ENCODE measurements at regions of chr3 and their contacts with region 1.

Region 1: DNA sequence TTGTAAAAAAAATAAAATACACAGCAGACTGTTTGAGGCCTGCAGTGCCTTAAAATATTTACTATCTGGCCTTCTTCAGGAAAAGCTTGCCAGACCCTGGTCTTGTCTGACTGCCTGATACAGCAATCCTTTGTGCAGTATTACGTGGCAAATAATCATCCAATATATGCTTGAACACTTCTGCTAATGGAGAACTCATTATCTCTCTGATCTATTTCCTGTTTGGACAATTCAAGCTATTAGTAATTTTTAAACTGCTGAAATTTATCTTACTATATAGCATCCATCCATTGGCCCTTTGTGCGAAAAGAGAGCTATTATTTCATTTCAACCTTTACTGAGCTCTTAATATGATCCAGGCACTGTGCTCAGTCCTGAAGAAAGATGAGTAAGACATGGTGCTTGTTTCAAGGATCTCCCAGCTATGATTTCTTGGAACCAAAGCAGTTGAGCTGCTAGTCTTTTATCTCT is 15.9 kb downstream of the ATG7 start:
- DNase-seq: no peak
- H3K4me3 ChIP-seq: no peak overlapping the region
- H3K4me3 Mint-ChIP-seq: no peak overlapping the region
- H3K27ac Mint-ChIP-seq: no peak overlapping the region
- H3K4me1 ChIP-seq: 0 out of 2 replicates have a peak, but pooled peaks cover 11% of the 10 kb centered on the region
- H3K4me1 Mint-ChIP-seq: peaks cover 17% of the 10 kb centered on the region
- H3K27me3 ChIP-seq: no peaks in the 10 kb centered on the region
- H3K27me3 Mint-ChIP-seq: no peaks in the 10 kb centered on the region
- CTCF ChIP-seq: no peak

Region 2: DNA sequence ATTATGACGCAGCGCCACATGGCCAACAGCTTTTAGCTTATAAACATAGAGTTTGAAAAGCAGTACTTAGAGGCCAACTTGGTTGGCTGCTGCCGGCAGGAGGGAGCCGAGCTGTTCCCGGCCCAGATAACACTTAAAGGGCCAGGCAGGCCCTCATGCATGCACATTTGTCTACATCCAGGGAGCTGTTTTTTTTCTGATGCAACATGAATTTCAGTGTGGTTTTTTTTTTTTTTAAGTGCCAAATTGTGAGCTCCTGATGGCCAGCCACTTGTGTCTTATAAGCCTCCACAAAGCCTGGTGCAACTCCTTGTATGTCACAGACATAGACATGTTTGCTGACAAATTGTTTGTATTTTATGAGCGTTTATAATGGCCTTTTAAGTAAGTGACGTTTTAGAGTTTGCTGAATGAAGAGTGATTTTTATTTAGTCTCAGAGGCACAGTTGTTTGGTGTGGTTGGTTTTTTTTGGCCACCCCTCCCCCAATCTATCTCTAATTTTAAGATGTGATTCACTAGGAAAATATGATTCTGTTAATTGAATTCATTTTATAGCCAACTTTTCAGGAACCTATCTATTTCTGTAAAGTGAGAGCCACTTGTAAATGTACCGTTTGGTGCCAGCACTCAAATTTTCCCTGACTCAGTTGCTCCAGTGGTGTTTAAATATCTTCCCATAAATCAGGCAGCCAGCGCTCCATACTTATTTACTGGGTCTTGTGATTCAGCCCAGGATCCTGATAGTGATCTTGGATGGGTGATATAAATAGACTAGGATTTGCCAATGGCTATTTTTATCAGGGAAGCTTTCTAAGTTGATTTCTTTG is 221.3 kb after region 1 on chr3:
- CTCF ChIA-PET with region 1: no interaction called
- POLR2A ChIA-PET with region 1: interaction called, 13 read pairs
- intact Hi-C with region 1: no loop called
- DNase-seq: no peak
- H3K4me3 ChIP-seq: no peak overlapping the region
- H3K4me3 Mint-ChIP-seq: no peak overlapping the region
- H3K27ac Mint-ChIP-seq: no peak overlapping the region
- H3K4me1 ChIP-seq: no peaks in the 10 kb centered on the region
- H3K4me1 Mint-ChIP-seq: no peaks in the 10 kb centered on the region
- H3K27me3 ChIP-seq: no peaks in the 10 kb centered on the region
- H3K27me3 Mint-ChIP-seq: no peaks in the 10 kb centered on the region
- CTCF ChIP-seq: no peak

Region 3: DNA sequence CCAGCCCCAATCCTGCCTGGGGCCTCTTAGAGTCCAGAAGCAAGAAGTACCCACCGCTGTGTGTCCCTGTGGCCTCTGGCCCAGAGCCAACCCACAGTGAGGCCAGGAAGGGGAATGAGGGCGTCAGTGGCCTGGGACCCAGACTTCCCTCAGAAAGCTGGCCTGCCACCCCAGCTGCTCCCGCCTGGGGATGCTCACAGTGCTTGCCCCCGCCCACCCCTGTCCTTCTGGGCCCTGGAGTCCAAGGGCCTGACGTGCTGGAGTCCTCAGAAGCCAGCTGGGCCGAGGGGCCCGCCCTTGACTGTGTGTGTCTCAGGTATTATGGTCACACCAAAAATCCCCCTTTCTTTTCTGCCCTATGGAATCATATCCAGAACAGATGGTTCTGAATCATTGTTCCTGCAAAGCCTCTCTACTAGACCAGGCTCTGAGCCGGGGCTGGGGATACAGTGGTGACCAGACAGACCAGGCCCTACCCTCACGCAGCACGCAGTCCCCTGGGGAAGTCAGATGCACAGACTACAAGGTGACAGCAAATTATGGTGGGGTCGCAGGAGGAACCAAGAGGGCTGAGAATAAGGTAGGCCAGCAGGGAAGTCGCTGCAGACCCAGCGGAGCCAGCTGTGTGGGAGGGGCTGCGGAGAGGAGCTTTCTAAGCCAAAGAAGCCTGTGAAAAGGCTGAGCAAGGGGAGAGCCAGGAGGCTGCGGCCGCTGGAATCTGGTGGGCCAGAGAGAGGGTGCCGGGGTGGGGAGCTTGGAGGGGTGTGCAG is 256.5 kb after region 1 on chr3:
- CTCF ChIA-PET with region 1: no interaction called
- POLR2A ChIA-PET with region 1: no interaction called
- intact Hi-C with region 1: no loop called
- DNase-seq: no peak
- H3K4me3 ChIP-seq: no peak overlapping the region
- H3K4me3 Mint-ChIP-seq: no peak overlapping the region
- H3K27ac Mint-ChIP-seq: no peak overlapping the region
- H3K4me1 ChIP-seq: no peaks in the 10 kb centered on the region
- H3K4me1 Mint-ChIP-seq: no peaks in the 10 kb centered on the region
- H3K27me3 ChIP-seq: no peaks in the 10 kb centered on the region
- H3K27me3 Mint-ChIP-seq: no peaks in the 10 kb centered on the region
- CTCF ChIP-seq: no peak

Measured in Caco-2 (cell line).